RWPE1 (cell line): ENCODE measurements at regions of chr14 and their contacts with region 1.

Region 1: DNA sequence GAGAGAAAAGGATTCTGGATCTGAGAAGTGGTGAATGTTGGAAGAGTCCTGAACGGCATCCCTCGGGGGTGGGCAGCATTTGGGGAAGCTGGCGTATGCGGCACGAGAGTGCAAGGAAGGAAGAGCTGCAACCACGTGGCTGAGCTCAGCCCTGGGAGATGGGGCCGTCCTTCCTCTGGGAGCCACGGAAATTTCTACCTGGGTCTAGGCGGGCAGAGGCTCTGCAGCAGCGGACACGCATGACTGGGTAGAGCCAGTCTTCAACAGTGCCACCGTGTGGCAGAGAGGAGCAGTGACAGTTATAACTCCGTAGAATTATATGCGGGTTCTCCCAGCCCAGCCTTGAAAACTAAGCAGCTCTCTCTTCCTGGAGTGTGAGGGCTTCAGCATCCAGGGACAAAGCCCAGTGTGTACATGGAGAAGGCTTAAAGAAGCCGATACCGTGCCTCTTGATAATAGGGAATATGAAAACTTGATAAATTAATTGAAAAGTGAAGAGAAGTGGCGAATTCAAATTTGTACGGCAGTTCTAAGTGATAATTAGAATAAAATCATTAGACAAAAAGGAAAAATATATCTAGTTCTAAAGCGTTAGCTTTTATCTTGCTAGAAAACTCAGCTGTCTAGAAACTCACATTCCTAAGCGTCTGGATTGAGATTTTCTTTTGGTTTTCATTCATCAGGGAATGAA is 82.9 kb upstream of the STXBP6 start:
- DNase-seq: peak; percentile 44
- H3K27ac ChIP-seq: no peak overlapping the region
- CTCF ChIP-seq: peak; percentile 77

Region 2: DNA sequence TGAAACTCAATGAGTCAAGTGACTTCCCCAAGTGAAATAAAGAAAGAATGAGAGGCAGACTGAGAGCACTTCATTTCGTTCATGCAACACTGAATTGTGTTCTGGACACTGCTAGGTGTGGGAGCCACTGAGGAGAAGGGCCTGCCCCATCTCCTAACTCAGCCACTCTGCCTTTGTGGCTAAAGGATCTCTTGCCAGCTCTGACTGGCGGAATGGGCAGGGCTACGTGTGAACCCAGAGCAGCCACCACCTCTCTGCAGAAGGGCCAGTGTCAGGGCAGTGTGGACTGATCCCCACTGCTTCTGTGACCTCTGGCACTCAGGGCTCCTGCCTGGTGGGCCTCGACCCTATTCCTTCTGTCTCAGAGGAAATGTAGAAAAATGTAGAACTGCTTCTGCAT is 452.4 kb before region 1 on chr14:
- CTCF ChIA-PET with region 1: no interaction called
- POLR2A ChIA-PET with region 1: no interaction called
- DNase-seq: no peak
- H3K27ac ChIP-seq: no peak overlapping the region
- CTCF ChIP-seq: no peak

Region 3: GRCh38 chr14:24806061-24806678 is 326.7 kb before region 1 on chr14:
- CTCF ChIA-PET with region 1: interaction called, 19 read pairs
- POLR2A ChIA-PET with region 1: no interaction called
- DNase-seq: peak; percentile 37
- H3K27ac ChIP-seq: no peak overlapping the region
- CTCF ChIP-seq: peak; percentile 73

Region 4: GRCh38 chr14:24952851-24953666 is 179.8 kb before region 1 on chr14:
- CTCF ChIA-PET with region 1: no interaction called
- POLR2A ChIA-PET with region 1: no interaction called
- DNase-seq: no peak
- H3K27ac ChIP-seq: no peak overlapping the region
- CTCF ChIP-seq: no peak